ENCODE measurements at regions of chr2 and their contacts with region 1.

Region 1: GRCh38 chr2:101300164-101300563 is 8.3 kb downstream of the RNF149 start:
- DNase-seq: no peak
- ATAC-seq: peak; percentile 16
- H3K4me3 ChIP-seq: no peak overlapping the region
- H3K4me3 Mint-ChIP-seq: peak overlapping the region; percentile 8
- H3K27ac ChIP-seq: no peak overlapping the region
- H3K27ac Mint-ChIP-seq: peak overlapping the region; percentile 75
- H3K4me1 ChIP-seq: peaks cover 80% of the 10 kb centered on the region
- H3K4me1 Mint-ChIP-seq: peaks cover 95% of the 10 kb centered on the region
- H3K27me3 ChIP-seq: no peaks in the 10 kb centered on the region
- H3K27me3 Mint-ChIP-seq: no peaks in the 10 kb centered on the region
- CTCF ChIP-seq: no peak

Region 2: DNA sequence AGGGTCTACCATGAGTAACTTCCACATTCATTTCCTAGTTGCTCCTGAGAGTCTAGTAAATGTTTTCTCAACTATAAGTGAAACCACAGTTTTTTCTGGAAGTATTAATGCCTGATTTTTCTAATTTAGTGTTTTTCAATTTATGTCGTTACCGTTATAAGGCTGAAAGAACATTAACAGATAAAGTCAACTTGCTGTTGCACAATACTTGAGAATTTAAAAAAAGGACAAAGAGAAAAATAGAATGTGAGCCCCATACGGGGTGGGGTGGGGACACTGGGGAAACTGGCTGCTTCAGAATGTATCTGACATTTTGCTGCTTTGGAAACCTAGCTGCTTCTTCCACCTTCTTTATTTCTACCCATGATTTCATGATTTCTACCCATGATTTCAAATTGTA is 21.2 kb before region 1 on chr2:
- CTCF ChIA-PET with region 1: interaction called, 4 read pairs
- POLR2A ChIA-PET with region 1: interaction called, 3 read pairs
- intact Hi-C with region 1: loop called (anchors 2 to 5 kb)
- DNase-seq: no peak
- ATAC-seq: no peak
- H3K4me3 ChIP-seq: no peak overlapping the region
- H3K4me3 Mint-ChIP-seq: no peak overlapping the region
- H3K27ac ChIP-seq: no peak overlapping the region
- H3K27ac Mint-ChIP-seq: peak overlapping the region; percentile 63
- H3K4me1 ChIP-seq: peaks cover 2% of the 10 kb centered on the region
- H3K4me1 Mint-ChIP-seq: peaks cover 64% of the 10 kb centered on the region
- H3K27me3 ChIP-seq: no peaks in the 10 kb centered on the region
- H3K27me3 Mint-ChIP-seq: no peaks in the 10 kb centered on the region
- CTCF ChIP-seq: no peak

Region 3: DNA sequence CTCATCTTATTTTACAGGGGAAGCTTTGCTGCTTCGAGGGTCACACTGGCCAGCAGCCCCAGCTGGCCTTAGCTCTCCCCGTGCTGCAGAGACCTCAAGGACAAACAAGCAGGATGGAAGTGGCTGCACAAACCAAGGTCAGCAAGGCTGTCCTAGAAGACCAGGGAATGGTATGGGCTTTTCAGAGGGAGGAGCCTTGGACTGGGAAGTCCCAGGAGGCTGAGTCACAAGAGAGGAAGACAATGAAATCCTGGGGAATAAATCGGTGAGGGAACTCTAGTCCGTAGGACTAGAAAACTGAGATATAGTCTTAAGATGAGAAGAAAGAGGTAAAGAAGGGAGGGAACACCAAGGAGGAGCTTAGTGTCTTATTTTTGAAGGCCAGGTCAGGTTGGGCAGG is 71.5 kb after region 1 on chr2:
- CTCF ChIA-PET with region 1: no interaction called
- POLR2A ChIA-PET with region 1: no interaction called
- intact Hi-C with region 1: no loop called
- DNase-seq: no peak
- ATAC-seq: no peak
- H3K4me3 ChIP-seq: no peak overlapping the region
- H3K4me3 Mint-ChIP-seq: no peak overlapping the region
- H3K27ac ChIP-seq: no peak overlapping the region
- H3K27ac Mint-ChIP-seq: no peak overlapping the region
- H3K4me1 ChIP-seq: peaks cover 8% of the 10 kb centered on the region
- H3K4me1 Mint-ChIP-seq: peaks cover 18% of the 10 kb centered on the region
- H3K27me3 ChIP-seq: no peaks in the 10 kb centered on the region
- H3K27me3 Mint-ChIP-seq: no peaks in the 10 kb centered on the region
- CTCF ChIP-seq: no peak

Region 4: DNA sequence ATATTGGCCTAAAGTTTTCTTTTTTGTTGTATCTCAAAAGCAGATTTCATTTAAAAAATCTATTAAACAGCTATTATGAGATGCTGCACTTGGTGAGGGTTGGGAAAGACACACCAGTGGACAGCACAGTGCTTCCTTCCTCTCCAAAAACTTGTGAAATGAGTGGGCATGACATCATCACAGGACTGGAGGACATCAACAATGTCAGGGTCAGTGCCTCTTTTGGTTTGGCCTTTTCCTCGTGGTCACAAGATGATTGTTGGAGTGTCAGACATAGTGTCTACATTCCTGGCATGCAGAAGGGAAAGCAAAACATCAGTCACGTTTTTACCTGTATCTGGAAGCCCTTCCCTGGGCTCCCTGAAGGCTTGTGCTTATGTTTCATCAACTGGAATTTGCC is 741.2 kb after region 1 on chr2:
- CTCF ChIA-PET with region 1: no interaction called
- POLR2A ChIA-PET with region 1: no interaction called
- intact Hi-C with region 1: no loop called
- DNase-seq: peak in 3 of 14 experiments; percentile 15 to 59 (median 44)
- ATAC-seq: no peak
- H3K4me3 ChIP-seq: no peak overlapping the region
- H3K4me3 Mint-ChIP-seq: no peak overlapping the region
- H3K27ac ChIP-seq: no peak overlapping the region
- H3K27ac Mint-ChIP-seq: no peak overlapping the region
- H3K4me1 ChIP-seq: peaks cover 3% of the 10 kb centered on the region
- H3K4me1 Mint-ChIP-seq: no peaks in the 10 kb centered on the region
- H3K27me3 ChIP-seq: peaks cover 0 to 7% of the 10 kb centered on the region in 2 experiments
- H3K27me3 Mint-ChIP-seq: peaks cover 19% of the 10 kb centered on the region
- CTCF ChIP-seq: no peak